ENCODE measurements at regions of chr15 and their contacts with region 1.

Region 1: DNA sequence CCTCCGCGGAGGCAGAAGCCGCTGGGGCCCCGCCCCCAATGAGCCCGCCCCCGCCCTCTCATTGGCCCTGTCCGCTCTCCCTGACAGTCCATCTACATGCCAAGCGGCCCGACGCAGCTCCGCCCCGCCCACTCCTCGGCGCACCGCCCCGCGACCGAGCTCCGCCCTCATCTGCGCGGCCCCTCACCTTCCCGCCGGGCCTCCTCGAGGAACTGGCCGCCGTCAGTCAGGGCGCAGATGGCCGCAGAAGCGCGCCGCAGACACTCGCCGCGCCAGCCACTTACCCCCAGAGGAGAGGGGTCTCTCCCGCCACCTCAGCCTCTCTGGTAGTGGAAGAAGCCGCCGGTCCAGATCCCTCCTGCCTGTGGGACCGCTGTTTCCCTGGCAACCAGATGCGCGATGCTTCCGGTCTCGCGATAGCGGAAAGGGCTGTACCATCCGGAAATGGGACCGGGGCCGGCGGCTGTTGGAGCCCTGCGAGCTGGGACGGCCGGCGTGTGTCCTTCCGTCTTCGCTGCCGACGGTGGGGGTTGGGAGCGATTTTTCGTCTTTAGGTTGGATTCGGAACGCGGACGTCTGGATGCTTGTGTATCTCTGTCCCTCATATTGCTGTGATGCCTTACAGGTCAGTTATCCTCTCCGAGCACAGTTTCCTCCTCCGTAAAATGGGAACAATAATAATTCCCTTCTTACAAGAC is at the start of gene FSIP1:
- DNase-seq: peak; percentile 98
- H3K4me3 ChIP-seq: peak within 1 kb of the TSS; percentile 84
- H3K27ac ChIP-seq: peak within 1 kb of the TSS; percentile 13
- H3K4me1 ChIP-seq: peaks cover 18% of the 10 kb centered on the region
- CTCF ChIP-seq: no peak
- total RNA-seq, gene FSIP1: 0.21 and 0.28 TPM in 2 replicates

Region 2: GRCh38 chr15:39874890-39875549 is 92.4 kb after region 1 on chr15:
- CTCF ChIA-PET with region 1: no interaction called
- POLR2A ChIA-PET with region 1: interaction called, 3 read pairs
- intact Hi-C with region 1: loop called (anchors 5 kb)
- DNase-seq: peak; percentile 33
- H3K4me3 ChIP-seq: no peak overlapping the region
- H3K27ac ChIP-seq: no peak overlapping the region
- H3K4me1 ChIP-seq: no peaks in the 10 kb centered on the region
- CTCF ChIP-seq: peak; percentile 80

Region 3: GRCh38 chr15:39896846-39897245 is 114.3 kb after region 1 on chr15:
- CTCF ChIA-PET with region 1: no interaction called
- POLR2A ChIA-PET with region 1: no interaction called
- intact Hi-C with region 1: no loop called
- DNase-seq: no peak
- H3K4me3 ChIP-seq: no peak overlapping the region
- H3K27ac ChIP-seq: no peak overlapping the region
- H3K4me1 ChIP-seq: no peaks in the 10 kb centered on the region
- CTCF ChIP-seq: no peak

Region 4: GRCh38 chr15:39934397-39935071 is 151.9 kb after region 1 on chr15:
- CTCF ChIA-PET with region 1: no interaction called
- POLR2A ChIA-PET with region 1: no interaction called
- intact Hi-C with region 1: loop called (anchors 5 kb)
- DNase-seq: no peak
- H3K4me3 ChIP-seq: peak overlapping the region; percentile 72
- H3K27ac ChIP-seq: no peak overlapping the region
- H3K4me1 ChIP-seq: peaks cover 13% of the 10 kb centered on the region
- CTCF ChIP-seq: no peak

Region 5: DNA sequence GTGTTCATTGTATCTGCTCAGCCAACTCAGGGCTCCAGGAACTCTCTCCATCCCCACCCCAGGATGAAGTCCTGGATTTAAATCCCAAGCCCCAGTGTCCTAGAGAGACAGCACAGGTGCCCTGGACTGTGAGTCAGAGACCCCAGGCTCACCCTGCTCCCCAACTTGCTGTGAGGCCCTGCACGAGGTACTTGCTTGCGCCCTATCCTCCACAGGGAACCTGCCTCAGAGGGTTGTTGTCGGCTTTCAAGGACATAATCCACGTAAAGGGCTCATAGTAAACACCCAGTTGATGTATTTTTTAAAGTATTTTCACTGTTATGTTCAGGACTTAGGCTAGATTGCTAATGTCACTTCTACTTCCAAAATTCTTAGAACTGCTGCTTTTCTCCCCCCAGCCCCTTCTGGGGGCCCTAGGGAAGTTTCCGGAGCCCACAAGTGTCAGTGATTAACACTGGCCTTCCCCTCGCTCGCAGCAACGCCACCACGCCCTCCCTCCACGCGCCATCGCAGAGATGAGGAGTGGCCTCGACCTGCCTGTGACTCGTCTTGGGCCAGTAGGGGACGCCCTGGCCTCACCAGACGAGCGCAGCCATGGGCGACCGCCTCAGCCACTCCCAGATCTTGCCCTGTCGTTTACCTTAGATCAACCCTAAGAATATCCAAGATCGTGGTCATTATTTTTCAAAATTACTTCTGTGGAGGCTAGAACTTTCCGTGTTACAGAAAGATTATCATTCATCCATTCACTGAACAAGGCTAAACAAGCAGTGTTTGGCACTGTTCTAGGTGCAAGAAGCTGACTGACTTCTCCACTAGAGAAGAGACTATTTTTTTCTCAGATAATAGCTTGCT is 262.4 kb after region 1 on chr15:
- CTCF ChIA-PET with region 1: no interaction called
- POLR2A ChIA-PET with region 1: interaction called, 3 read pairs
- intact Hi-C with region 1: loop called (anchors 5 kb)
- DNase-seq: peak; percentile 87
- H3K4me3 ChIP-seq: no peak overlapping the region
- H3K27ac ChIP-seq: peak overlapping the region; percentile 15
- H3K4me1 ChIP-seq: peaks cover 68% of the 10 kb centered on the region
- CTCF ChIP-seq: peak; percentile 97

Region 6: GRCh38 chr15:40160689-40161688 is 378.4 kb after region 1 on chr15 and contains the start of gene BUB1B:
- CTCF ChIA-PET with region 1: no interaction called
- POLR2A ChIA-PET with region 1: no interaction called
- intact Hi-C with region 1: loop called (anchors 10 kb)
- DNase-seq: peak; percentile 97
- H3K4me3 ChIP-seq: peak within 1 kb of the TSS; percentile 91
- H3K27ac ChIP-seq: peak within 1 kb of the TSS; percentile 68
- H3K4me1 ChIP-seq: peaks cover 28% of the 10 kb centered on the region
- CTCF ChIP-seq: no peak
- total RNA-seq, gene BUB1B: 192 and 215 TPM in 2 replicates

Region 7: GRCh38 chr15:40323239-40323952 is 540.8 kb after region 1 on chr15 and contains the start of gene INAFM2:
- CTCF ChIA-PET with region 1: no interaction called
- POLR2A ChIA-PET with region 1: no interaction called
- intact Hi-C with region 1: loop called (anchors 5 kb)
- DNase-seq: peak; percentile 94
- H3K4me3 ChIP-seq: peak within 1 kb of the TSS; percentile 65
- H3K27ac ChIP-seq: no peak within 1 kb of the TSS
- H3K4me1 ChIP-seq: peaks cover 6% of the 10 kb centered on the region
- CTCF ChIP-seq: peak; percentile 66
- total RNA-seq, gene INAFM2: 1.1 and 3.3 TPM in 2 replicates

Region 8: DNA sequence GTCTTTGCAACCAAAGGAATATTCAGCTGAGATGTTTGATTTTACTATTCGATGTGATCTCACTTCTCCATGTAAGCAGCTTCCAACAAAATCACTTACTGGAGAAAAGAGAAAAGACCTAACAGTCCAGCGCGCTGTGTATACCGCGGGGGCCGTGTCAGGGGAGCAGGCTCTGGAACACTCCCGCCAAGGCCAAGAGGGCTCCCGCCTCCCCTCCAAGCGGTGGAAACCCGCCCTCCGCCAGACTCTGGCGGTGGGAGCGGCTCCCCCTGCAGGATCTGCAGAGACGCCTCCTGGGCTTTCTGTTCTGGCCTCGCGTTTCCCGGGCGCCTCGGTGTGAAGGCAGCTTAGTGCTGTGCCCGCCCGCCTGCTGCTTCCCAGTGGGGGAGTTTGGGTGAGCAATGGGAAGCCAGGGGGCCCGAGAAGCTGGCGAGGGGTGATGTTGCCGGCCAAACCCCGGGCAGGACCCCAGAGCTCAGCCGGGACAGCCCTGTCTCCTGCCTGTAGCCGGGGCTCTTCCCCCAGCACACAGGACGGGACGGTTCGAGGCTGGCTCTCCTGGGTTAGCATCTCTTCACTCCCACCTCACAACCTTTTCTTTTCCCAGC is 724.5 kb after region 1 on chr15:
- CTCF ChIA-PET with region 1: no interaction called
- POLR2A ChIA-PET with region 1: no interaction called
- intact Hi-C with region 1: no loop called
- DNase-seq: peak; percentile 46
- H3K4me3 ChIP-seq: no peak overlapping the region
- H3K27ac ChIP-seq: no peak overlapping the region
- H3K4me1 ChIP-seq: no peaks in the 10 kb centered on the region
- CTCF ChIP-seq: peak; percentile 65

Measured in OCI-LY7 (cell line).